HEK293 (cell line): ENCODE measurements at regions of chr6 and their contacts with region 1.

Region 1: GRCh38 chr6:73520688-73521350 is at the start of gene EEF1A1:
- H3K4me3 ChIP-seq: peak within 1 kb of the TSS; percentile 80
- H3K27ac ChIP-seq: peak within 1 kb of the TSS; percentile 94
- H3K4me1 ChIP-seq: no peaks in the 10 kb centered on the region
- CTCF ChIP-seq: peak; percentile 20; the same call in 1 of the 2 replicates

Region 2: GRCh38 chr6:73461537-73462350 is 59.1 kb before region 1 on chr6 and contains the start of gene MTO1:
- CTCF ChIA-PET with region 1: no interaction called
- POLR2A ChIA-PET with region 1: interaction called, 24 read pairs
- H3K4me3 ChIP-seq: peak within 1 kb of the TSS; percentile 78
- H3K27ac ChIP-seq: peak within 1 kb of the TSS; percentile 72
- H3K4me1 ChIP-seq: no peaks in the 10 kb centered on the region
- CTCF ChIP-seq: no peak

Region 3: GRCh38 chr6:73558624-73559398 is 38.0 kb after region 1 on chr6:
- CTCF ChIA-PET with region 1: interaction called, 3 read pairs
- POLR2A ChIA-PET with region 1: interaction called, 13 read pairs
- H3K4me3 ChIP-seq: no peak overlapping the region
- H3K27ac ChIP-seq: no peak overlapping the region
- H3K4me1 ChIP-seq: no peaks in the 10 kb centered on the region
- CTCF ChIP-seq: no peak

Region 4: DNA sequence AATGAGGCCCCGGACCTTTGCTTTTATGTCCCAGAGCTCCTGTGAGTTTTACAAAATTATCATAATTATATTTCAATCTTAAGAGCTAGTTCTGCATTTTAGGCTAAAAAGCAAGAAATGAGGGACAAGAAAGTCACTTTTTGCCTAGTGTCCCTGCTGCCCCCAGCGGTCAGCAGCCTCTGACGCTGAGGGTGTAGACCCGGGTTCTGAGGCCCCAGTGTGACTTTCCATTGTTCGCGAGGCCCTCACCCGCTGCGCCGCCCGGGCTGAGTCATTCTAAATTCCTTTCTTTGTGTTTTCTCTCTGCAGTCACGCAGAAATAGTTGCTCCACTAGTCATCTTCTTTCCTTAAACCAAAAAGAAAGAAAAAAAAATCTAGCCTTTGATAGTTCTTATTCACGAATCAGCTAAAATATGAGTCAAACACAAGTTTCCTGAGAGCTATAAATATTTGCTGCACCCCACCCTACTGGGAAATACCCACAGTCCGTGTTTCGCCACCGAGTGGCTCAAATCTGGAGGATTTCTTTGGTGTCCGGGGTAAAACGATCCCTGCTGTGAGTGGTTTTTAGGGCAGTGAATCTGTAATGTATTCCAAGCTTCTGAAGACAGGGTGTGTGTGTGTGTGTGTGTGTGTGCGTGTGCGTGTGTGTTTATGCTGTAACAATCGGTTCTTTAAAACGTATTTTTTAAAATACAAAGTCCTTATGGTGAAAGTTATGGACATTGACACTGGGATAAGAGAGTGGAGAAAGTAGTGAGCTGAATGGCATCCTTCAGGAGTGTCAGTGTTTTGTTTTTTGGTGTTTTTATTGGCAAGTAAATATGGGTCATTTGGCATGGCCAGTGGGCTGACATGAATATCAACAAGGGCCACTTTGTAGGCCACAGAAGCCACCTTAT is 59.7 kb after region 1 on chr6:
- CTCF ChIA-PET with region 1: interaction called, 6 read pairs
- POLR2A ChIA-PET with region 1: interaction called, 45 read pairs
- H3K4me3 ChIP-seq: peak overlapping the region; percentile 44
- H3K27ac ChIP-seq: peak overlapping the region; percentile 72
- H3K4me1 ChIP-seq: peaks cover 8% of the 10 kb centered on the region; the same call in 1 of the 2 replicates
- CTCF ChIP-seq: peak; percentile 66

Region 5: DNA sequence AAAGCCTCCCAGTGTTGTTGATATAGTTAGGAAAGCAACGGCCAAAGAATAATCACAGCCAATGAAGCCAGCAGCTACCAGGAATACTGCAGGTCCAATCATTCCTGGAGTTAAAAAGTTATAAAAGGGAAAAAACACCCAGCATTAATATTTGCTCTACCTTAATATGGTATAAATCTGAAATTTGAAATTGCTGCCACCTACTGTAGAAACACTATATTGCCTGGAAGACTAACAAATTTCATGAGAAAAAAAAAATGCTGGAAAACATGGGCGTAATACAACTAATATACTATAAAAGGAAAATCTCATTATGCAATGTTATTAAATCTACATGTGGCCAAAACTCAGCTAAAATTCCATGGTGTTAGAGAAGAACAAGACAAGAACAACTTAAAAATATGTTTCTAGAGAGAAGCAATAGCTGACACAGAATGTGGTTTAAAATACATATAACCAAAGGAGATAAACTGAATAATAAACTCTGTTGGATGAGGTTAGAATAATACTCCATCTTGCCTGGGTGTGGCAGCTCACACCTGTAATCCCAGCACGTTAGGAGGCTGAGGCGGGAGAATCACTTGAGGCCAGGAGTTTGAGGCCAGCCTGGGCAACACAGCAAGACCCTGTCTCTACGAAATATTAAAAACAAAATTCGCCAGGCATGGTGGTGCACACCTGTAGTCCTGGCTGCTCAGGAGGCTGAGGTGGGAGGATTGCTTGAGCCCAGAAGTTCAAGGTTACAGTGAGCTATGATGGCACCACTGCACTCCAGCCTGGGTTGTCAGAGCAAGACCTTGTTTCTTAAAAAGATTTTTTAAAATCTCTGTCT is 89.8 kb after region 1 on chr6:
- CTCF ChIA-PET with region 1: interaction called, 98 read pairs
- POLR2A ChIA-PET with region 1: interaction called, 16 read pairs
- H3K4me3 ChIP-seq: no peak overlapping the region
- H3K27ac ChIP-seq: no peak overlapping the region
- H3K4me1 ChIP-seq: no peaks in the 10 kb centered on the region
- CTCF ChIP-seq: no peak

Region 6: GRCh38 chr6:73653571-73654424 is 133.0 kb after region 1 on chr6 and contains the start of gene SLC17A5:
- CTCF ChIA-PET with region 1: interaction called, 19 read pairs
- POLR2A ChIA-PET with region 1: interaction called, 88 read pairs
- H3K4me3 ChIP-seq: peak within 1 kb of the TSS; percentile 75
- H3K27ac ChIP-seq: peak within 1 kb of the TSS; percentile 96
- H3K4me1 ChIP-seq: no peaks in the 10 kb centered on the region; the same call in 1 of the 2 replicates
- CTCF ChIP-seq: no peak